CD4-positive, alpha-beta T cell (primary cell): ENCODE measurements at regions of chr11 and their contacts with region 1.

Region 1: GRCh38 chr11:46352063-46352841 is 5.0 kb downstream of the DGKZ start:
- DNase-seq: peak; percentile 60 to 93 (median 76)
- ATAC-seq: peak; percentile 59
- H3K4me3 ChIP-seq: peak overlapping the region; percentile 56
- H3K4me3 Mint-ChIP-seq: peak overlapping the region; percentile 83
- H3K27ac ChIP-seq: peak overlapping the region; percentile 71 to 77
- H3K27ac Mint-ChIP-seq: peak overlapping the region; percentile 89
- H3K4me1 ChIP-seq: peaks cover 89% of the 10 kb centered on the region
- H3K4me1 Mint-ChIP-seq: peaks cover 74% of the 10 kb centered on the region
- H3K27me3 ChIP-seq: no peaks in the 10 kb centered on the region
- H3K27me3 Mint-ChIP-seq: no peaks in the 10 kb centered on the region
- CTCF ChIP-seq: peak; percentile 98

Region 2: GRCh38 chr11:46295312-46296058 is 56.8 kb before region 1 on chr11:
- CTCF ChIA-PET with region 1: interaction called, 6 read pairs
- POLR2A ChIA-PET with region 1: interaction called, 9 read pairs
- intact Hi-C with region 1: loop called in 1 of 2 experiments (anchors 5 kb)
- DNase-seq: peak; percentile 54 to 85 (median 73)
- ATAC-seq: peak; percentile 100
- H3K4me3 ChIP-seq: peak overlapping the region; percentile 67
- H3K4me3 Mint-ChIP-seq: peak overlapping the region; percentile 89
- H3K27ac ChIP-seq: no peak overlapping the region
- H3K27ac Mint-ChIP-seq: no peak overlapping the region
- H3K4me1 ChIP-seq: peaks cover 22% of the 10 kb centered on the region
- H3K4me1 Mint-ChIP-seq: peaks cover 14% of the 10 kb centered on the region
- H3K27me3 ChIP-seq: peaks cover 6 to 16% of the 10 kb centered on the region in 2 experiments
- H3K27me3 Mint-ChIP-seq: peaks cover 11% of the 10 kb centered on the region
- CTCF ChIP-seq: no peak

Region 3: DNA sequence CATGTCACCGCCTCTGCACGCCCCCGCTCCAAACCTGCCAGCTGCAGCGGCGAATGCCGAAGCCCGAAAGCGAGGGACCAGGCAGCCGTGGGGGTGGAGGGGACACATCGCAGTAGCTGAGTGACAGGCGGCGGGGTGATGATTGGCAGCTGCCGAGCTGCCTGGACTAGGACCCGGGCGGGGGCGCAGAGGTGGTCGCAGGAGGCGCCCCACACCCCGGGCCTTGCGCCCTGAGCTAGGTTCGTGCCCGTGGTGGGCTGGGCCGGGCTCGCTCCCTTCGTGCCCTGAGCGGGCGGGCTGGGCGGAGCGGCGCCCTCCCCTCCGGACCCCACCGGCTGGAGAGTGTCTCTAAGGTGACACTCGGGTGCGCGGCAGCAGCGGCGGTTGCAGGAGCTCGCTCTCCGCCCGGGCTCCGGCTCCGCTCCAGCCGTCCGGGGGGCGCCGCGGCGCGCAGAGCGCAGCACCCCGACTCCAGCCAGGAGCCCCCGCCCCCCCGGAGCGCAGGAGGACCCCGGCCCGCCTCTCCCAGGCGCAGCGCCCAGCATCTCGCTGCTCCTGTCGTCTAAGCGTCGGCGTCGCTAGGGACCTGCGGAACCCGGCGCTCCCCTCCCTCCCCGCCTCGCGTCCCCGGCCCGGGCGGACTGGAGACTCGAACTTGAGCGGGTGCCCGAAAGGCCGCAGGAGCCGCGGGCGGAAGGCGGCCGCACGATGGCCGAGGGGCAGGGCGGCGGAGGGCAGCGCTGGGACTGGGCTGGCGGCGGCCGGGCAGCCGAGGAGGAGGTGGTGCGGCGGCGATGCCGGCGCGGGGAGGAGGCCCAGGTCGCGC is 19.5 kb before region 1 on chr11:
- CTCF ChIA-PET with region 1: interaction called, 24 read pairs
- POLR2A ChIA-PET with region 1: interaction called, 266 read pairs
- intact Hi-C with region 1: loop called in 1 of 2 experiments (anchors 2 kb)
- DNase-seq: peak in 10 of 14 experiments; percentile 30 to 71 (median 54)
- ATAC-seq: peak; percentile 6
- H3K4me3 ChIP-seq: peak overlapping the region; percentile 71
- H3K4me3 Mint-ChIP-seq: peak overlapping the region; percentile 94
- H3K27ac ChIP-seq: peak overlapping the region in 1 of 2 donors; percentile 73
- H3K27ac Mint-ChIP-seq: peak overlapping the region; percentile 91
- H3K4me1 ChIP-seq: peaks cover 80% of the 10 kb centered on the region
- H3K4me1 Mint-ChIP-seq: peaks cover 76% of the 10 kb centered on the region
- H3K27me3 ChIP-seq: peaks cover 0 to 5% of the 10 kb centered on the region in 2 experiments
- H3K27me3 Mint-ChIP-seq: no peaks in the 10 kb centered on the region
- CTCF ChIP-seq: no peak

Region 4: DNA sequence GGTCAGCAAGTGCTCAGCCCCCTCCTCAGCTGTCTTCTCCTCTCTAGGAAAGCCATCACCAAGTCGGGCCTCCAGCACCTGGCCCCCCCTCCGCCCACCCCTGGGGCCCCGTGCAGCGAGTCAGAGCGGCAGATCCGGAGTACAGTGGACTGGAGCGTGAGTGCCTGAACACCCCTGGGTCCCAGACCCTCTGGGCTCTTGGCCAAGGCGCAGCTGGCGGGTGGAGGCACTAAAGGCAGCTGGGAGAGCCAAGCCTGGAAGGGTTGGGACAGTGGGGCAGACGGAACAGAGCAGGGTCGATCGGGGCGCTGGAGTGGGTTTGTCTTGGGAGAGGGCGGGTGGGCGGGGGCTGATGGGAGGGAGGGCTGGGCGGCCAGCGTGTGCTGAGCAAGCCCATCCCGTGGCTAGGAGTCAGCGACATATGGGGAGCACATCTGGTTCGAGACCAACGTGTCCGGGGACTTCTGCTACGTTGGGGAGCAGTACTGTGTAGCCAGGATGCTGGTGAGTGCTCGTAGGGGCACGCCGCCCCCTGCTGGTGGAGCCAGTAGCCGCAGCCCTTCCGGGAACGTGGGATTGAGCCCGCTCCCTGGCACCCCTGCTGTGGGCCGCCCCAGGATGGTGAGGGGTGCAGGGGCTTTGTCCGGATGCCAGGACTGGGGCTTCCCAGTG is 15.1 kb after region 1 on chr11:
- CTCF ChIA-PET with region 1: interaction called, 40 read pairs
- POLR2A ChIA-PET with region 1: interaction called, 26 read pairs
- intact Hi-C with region 1: loop called (anchors 1 kb)
- DNase-seq: peak; percentile 62 to 88 (median 74)
- ATAC-seq: peak; percentile 88
- H3K4me3 ChIP-seq: no peak overlapping the region
- H3K4me3 Mint-ChIP-seq: no peak overlapping the region
- H3K27ac ChIP-seq: no peak overlapping the region
- H3K27ac Mint-ChIP-seq: peak overlapping the region; percentile 49
- H3K4me1 ChIP-seq: peaks cover 61% of the 10 kb centered on the region
- H3K4me1 Mint-ChIP-seq: peaks cover 55% of the 10 kb centered on the region
- H3K27me3 ChIP-seq: no peaks in the 10 kb centered on the region
- H3K27me3 Mint-ChIP-seq: no peaks in the 10 kb centered on the region
- CTCF ChIP-seq: peak; percentile 97

Region 5: GRCh38 chr11:46380340-46381047 is 28.2 kb after region 1 on chr11:
- CTCF ChIA-PET with region 1: interaction called, 8 read pairs
- POLR2A ChIA-PET with region 1: interaction called, 10 read pairs
- intact Hi-C with region 1: loop called in 1 of 2 experiments (anchors 1 kb)
- DNase-seq: peak in 11 of 14 experiments; percentile 30 to 72 (median 54)
- ATAC-seq: peak; percentile 47
- H3K4me3 ChIP-seq: peak overlapping the region; percentile 73
- H3K4me3 Mint-ChIP-seq: peak overlapping the region; percentile 80
- H3K27ac ChIP-seq: peak overlapping the region in 1 of 2 donors; percentile 61
- H3K27ac Mint-ChIP-seq: peak overlapping the region; percentile 57
- H3K4me1 ChIP-seq: peaks cover 34% of the 10 kb centered on the region
- H3K4me1 Mint-ChIP-seq: peaks cover 4% of the 10 kb centered on the region
- H3K27me3 ChIP-seq: peaks cover 23 to 25% of the 10 kb centered on the region in 2 experiments
- H3K27me3 Mint-ChIP-seq: peaks cover 18% of the 10 kb centered on the region
- CTCF ChIP-seq: no peak

Region 6: GRCh38 chr11:46537537-46538295 is 185.5 kb after region 1 on chr11:
- CTCF ChIA-PET with region 1: no interaction called
- POLR2A ChIA-PET with region 1: no interaction called
- intact Hi-C with region 1: loop called (anchors 5 to 10 kb)
- DNase-seq: peak; percentile 30 to 82 (median 48)
- ATAC-seq: peak; percentile 96
- H3K4me3 ChIP-seq: no peak overlapping the region
- H3K4me3 Mint-ChIP-seq: no peak overlapping the region
- H3K27ac ChIP-seq: no peak overlapping the region
- H3K27ac Mint-ChIP-seq: peak overlapping the region; percentile 1
- H3K4me1 ChIP-seq: peaks cover 3% of the 10 kb centered on the region
- H3K4me1 Mint-ChIP-seq: peaks cover 36% of the 10 kb centered on the region
- H3K27me3 ChIP-seq: no peaks in the 10 kb centered on the region
- H3K27me3 Mint-ChIP-seq: no peaks in the 10 kb centered on the region
- CTCF ChIP-seq: peak; percentile 96